CD8-positive, alpha-beta T cell (primary cell): ENCODE measurements at regions of chr9 and their contacts with region 1.

Region 1: GRCh38 chr9:34403554-34404380 is 27.1 kb upstream of the MYORG start:
- DNase-seq: peak in 8 of 9 experiments; percentile 34 to 66 (median 60)
- ATAC-seq: no peak
- H3K4me3 ChIP-seq: no peak overlapping the region
- H3K4me3 Mint-ChIP-seq: no peak overlapping the region
- H3K27ac ChIP-seq: no peak overlapping the region
- H3K27ac Mint-ChIP-seq: no peak overlapping the region
- H3K4me1 ChIP-seq: no peaks in the 10 kb centered on the region
- H3K4me1 Mint-ChIP-seq: no peaks in the 10 kb centered on the region
- H3K27me3 ChIP-seq: no peaks in the 10 kb centered on the region
- H3K27me3 Mint-ChIP-seq: no peaks in the 10 kb centered on the region
- CTCF ChIP-seq: peak; percentile 99

Region 2: DNA sequence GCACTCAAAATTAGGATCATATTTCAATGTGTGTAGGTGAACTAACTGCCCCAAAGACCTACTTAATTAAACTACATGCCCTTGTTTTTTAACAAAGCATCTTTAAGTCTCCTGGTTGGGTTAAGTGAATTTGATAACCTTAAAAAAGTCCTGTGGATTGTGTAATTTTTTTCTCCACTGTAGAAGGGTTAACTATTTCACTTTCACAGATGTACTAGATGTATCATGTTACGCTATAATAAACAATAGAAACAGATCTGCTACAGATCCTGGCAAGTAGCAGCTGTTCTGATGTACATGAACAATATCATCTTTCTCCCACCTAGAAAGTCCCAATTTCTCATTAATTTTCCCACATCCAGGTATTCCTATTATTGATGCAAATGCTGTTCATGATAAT is 93.6 kb before region 1 on chr9:
- CTCF ChIA-PET with region 1: no interaction called
- POLR2A ChIA-PET with region 1: no interaction called
- intact Hi-C with region 1: no loop called
- DNase-seq: no peak
- ATAC-seq: no peak
- H3K4me3 ChIP-seq: no peak overlapping the region
- H3K4me3 Mint-ChIP-seq: no peak overlapping the region
- H3K27ac ChIP-seq: no peak overlapping the region
- H3K27ac Mint-ChIP-seq: no peak overlapping the region
- H3K4me1 ChIP-seq: no peaks in the 10 kb centered on the region
- H3K4me1 Mint-ChIP-seq: no peaks in the 10 kb centered on the region
- H3K27me3 ChIP-seq: no peaks in the 10 kb centered on the region
- H3K27me3 Mint-ChIP-seq: no peaks in the 10 kb centered on the region
- CTCF ChIP-seq: no peak

Region 3: GRCh38 chr9:34386656-34387055 is 17.1 kb before region 1 on chr9:
- CTCF ChIA-PET with region 1: interaction called, 21 read pairs
- POLR2A ChIA-PET with region 1: no interaction called
- intact Hi-C with region 1: no loop called
- DNase-seq: peak in 1 of 9 experiments; percentile 41
- ATAC-seq: no peak
- H3K4me3 ChIP-seq: no peak overlapping the region
- H3K4me3 Mint-ChIP-seq: no peak overlapping the region
- H3K27ac ChIP-seq: no peak overlapping the region
- H3K27ac Mint-ChIP-seq: no peak overlapping the region
- H3K4me1 ChIP-seq: no peaks in the 10 kb centered on the region
- H3K4me1 Mint-ChIP-seq: peaks cover 2% of the 10 kb centered on the region
- H3K27me3 ChIP-seq: no peaks in the 10 kb centered on the region
- H3K27me3 Mint-ChIP-seq: no peaks in the 10 kb centered on the region
- CTCF ChIP-seq: no peak

Region 4: GRCh38 chr9:34493972-34494535 is 90.3 kb after region 1 on chr9:
- CTCF ChIA-PET with region 1: interaction called, 87 read pairs
- POLR2A ChIA-PET with region 1: no interaction called
- intact Hi-C with region 1: no loop called
- DNase-seq: peak in 6 of 9 experiments; percentile 11 to 36 (median 28)
- ATAC-seq: no peak
- H3K4me3 ChIP-seq: no peak overlapping the region
- H3K4me3 Mint-ChIP-seq: no peak overlapping the region
- H3K27ac ChIP-seq: no peak overlapping the region
- H3K27ac Mint-ChIP-seq: no peak overlapping the region
- H3K4me1 ChIP-seq: no peaks in the 10 kb centered on the region
- H3K4me1 Mint-ChIP-seq: no peaks in the 10 kb centered on the region
- H3K27me3 ChIP-seq: no peaks in the 10 kb centered on the region
- H3K27me3 Mint-ChIP-seq: peaks cover 24% of the 10 kb centered on the region
- CTCF ChIP-seq: no peak

Region 5: DNA sequence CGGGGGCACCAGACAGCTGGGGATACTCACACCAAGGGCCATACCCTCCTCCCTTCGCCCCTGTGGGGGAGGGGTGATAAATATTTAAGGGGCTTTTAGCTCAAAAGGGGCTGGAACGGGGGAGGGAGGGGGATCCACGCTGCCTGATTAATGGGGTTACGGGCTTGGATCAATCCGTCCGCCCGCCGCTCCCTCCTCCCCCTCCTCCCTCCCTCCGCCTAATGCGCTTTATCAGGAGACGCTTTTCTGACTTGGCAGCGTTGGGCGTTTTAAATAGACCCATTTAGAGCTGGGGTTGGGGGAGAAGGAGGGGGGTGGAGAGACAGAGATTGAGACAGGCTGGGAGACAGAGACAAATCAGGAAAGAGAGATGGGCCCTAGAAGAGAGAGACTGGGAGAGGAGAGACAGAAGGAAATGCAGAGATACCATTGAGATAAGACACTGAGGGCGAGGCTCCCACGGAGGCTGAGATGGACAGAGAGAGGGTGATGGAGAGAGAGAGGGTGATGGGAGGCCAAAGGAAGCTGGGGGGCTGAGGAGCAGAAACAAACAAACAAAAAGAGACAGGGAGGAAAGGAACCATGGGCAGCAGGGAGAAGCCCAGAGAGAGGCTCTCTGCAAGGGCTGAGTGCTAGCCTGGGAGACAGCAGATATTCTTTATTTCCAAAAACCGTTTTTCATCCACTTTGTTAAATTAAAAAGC is 175.5 kb after region 1 on chr9:
- CTCF ChIA-PET with region 1: interaction called, 16 read pairs
- POLR2A ChIA-PET with region 1: no interaction called
- intact Hi-C with region 1: no loop called
- DNase-seq: no peak
- ATAC-seq: no peak
- H3K4me3 ChIP-seq: no peak overlapping the region
- H3K4me3 Mint-ChIP-seq: no peak overlapping the region
- H3K27ac ChIP-seq: no peak overlapping the region
- H3K27ac Mint-ChIP-seq: no peak overlapping the region
- H3K4me1 ChIP-seq: peaks cover 8% of the 10 kb centered on the region
- H3K4me1 Mint-ChIP-seq: peaks cover 15% of the 10 kb centered on the region
- H3K27me3 ChIP-seq: peaks cover 20 to 26% of the 10 kb centered on the region in 2 experiments
- H3K27me3 Mint-ChIP-seq: peaks cover 69% of the 10 kb centered on the region
- CTCF ChIP-seq: no peak

Region 6: GRCh38 chr9:34603610-34604231 is 200.0 kb after region 1 on chr9:
- CTCF ChIA-PET with region 1: interaction called, 13 read pairs
- POLR2A ChIA-PET with region 1: no interaction called
- intact Hi-C with region 1: no loop called
- DNase-seq: peak; percentile 59 to 87 (median 80)
- ATAC-seq: peak; percentile 98
- H3K4me3 ChIP-seq: no peak overlapping the region
- H3K4me3 Mint-ChIP-seq: no peak overlapping the region
- H3K27ac ChIP-seq: no peak overlapping the region
- H3K27ac Mint-ChIP-seq: no peak overlapping the region
- H3K4me1 ChIP-seq: no peaks in the 10 kb centered on the region
- H3K4me1 Mint-ChIP-seq: no peaks in the 10 kb centered on the region
- H3K27me3 ChIP-seq: no peaks in the 10 kb centered on the region
- H3K27me3 Mint-ChIP-seq: peaks cover 3% of the 10 kb centered on the region
- CTCF ChIP-seq: peak; percentile 92